ENCODE measurements at regions of chr17 and their contacts with region 1.

Region 1: GRCh38 chr17:40909351-40909750 is 24.3 kb upstream of the KRT20 start:
- DNase-seq: peak; percentile 98
- ATAC-seq: peak; percentile 93
- H3K4me3 ChIP-seq: no peak overlapping the region
- H3K27ac ChIP-seq: no peak overlapping the region
- H3K4me1 ChIP-seq: peaks cover 10% of the 10 kb centered on the region
- H3K27me3 ChIP-seq: no peaks in the 10 kb centered on the region
- CTCF ChIP-seq: peak; percentile 96
- POLR2A ChIP-seq: 0 out of 2 replicates have a peak, but pooled peaks have one; percentile 53
- RAD21 ChIP-seq: peak; percentile 99

Region 2: GRCh38 chr17:40854159-40854814 is 55.1 kb before region 1 on chr17:
- CTCF ChIA-PET with region 1: interaction called, 3 read pairs
- POLR2A ChIA-PET with region 1: no interaction called
- dilution Hi-C with region 1: no loop called
- in situ Hi-C with region 1: loop called (anchors 5 kb)
- intact Hi-C with region 1: loop called (anchors 2 kb)
- DNase-seq: peak; percentile 93
- ATAC-seq: peak; percentile 75
- H3K4me3 ChIP-seq: no peak overlapping the region
- H3K27ac ChIP-seq: no peak overlapping the region
- H3K4me1 ChIP-seq: peaks cover 19% of the 10 kb centered on the region
- H3K27me3 ChIP-seq: no peaks in the 10 kb centered on the region
- CTCF ChIP-seq: no peak
- POLR2A ChIP-seq: no peak
- RAD21 ChIP-seq: 0 out of 2 replicates have a peak, but pooled peaks have one; percentile 6

Region 3: DNA sequence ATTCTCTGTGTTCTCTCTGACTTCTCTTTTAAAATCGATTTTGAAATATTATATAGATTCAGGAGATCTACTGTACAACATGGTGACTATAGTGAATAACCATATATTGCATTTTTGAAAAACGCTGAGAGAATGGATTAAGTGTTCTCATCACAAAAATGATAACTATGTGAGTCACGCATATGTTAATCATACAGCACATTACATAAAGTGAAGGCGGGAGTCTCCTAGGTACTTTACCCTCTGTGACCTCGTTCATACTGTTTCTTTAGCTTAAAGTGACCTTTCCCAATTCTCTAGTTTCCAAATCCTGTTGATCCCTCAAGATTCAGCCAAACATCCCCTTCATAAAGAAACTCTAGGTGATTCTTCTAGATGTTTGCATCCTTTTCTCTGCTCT is 93.5 kb after region 1 on chr17:
- CTCF ChIA-PET with region 1: no interaction called
- POLR2A ChIA-PET with region 1: no interaction called
- dilution Hi-C with region 1: no loop called
- in situ Hi-C with region 1: no loop called
- intact Hi-C with region 1: no loop called
- DNase-seq: peak; percentile 17
- ATAC-seq: no peak
- H3K4me3 ChIP-seq: no peak overlapping the region
- H3K27ac ChIP-seq: no peak overlapping the region
- H3K4me1 ChIP-seq: no peaks in the 10 kb centered on the region
- H3K27me3 ChIP-seq: no peaks in the 10 kb centered on the region
- CTCF ChIP-seq: no peak
- POLR2A ChIP-seq: no peak
- RAD21 ChIP-seq: no peak

Region 4: GRCh38 chr17:41024697-41025096 is 115.3 kb after region 1 on chr17:
- CTCF ChIA-PET with region 1: no interaction called
- POLR2A ChIA-PET with region 1: no interaction called
- dilution Hi-C with region 1: no loop called
- in situ Hi-C with region 1: no loop called
- intact Hi-C with region 1: no loop called
- DNase-seq: peak; percentile 14
- ATAC-seq: no peak
- H3K4me3 ChIP-seq: no peak overlapping the region
- H3K27ac ChIP-seq: no peak overlapping the region
- H3K4me1 ChIP-seq: peaks cover 9% of the 10 kb centered on the region
- H3K27me3 ChIP-seq: no peaks in the 10 kb centered on the region
- CTCF ChIP-seq: no peak
- POLR2A ChIP-seq: no peak
- RAD21 ChIP-seq: no peak

Region 5: GRCh38 chr17:41322094-41322902 is 412.9 kb after region 1 on chr17:
- CTCF ChIA-PET with region 1: interaction called, 8 read pairs
- POLR2A ChIA-PET with region 1: no interaction called
- dilution Hi-C with region 1: no loop called
- in situ Hi-C with region 1: loop called (anchors 5 kb)
- intact Hi-C with region 1: loop called (anchors 1 kb)
- DNase-seq: peak; percentile 79
- ATAC-seq: peak; percentile 97
- H3K4me3 ChIP-seq: no peak overlapping the region
- H3K27ac ChIP-seq: peak overlapping the region; percentile 51; the same call in 1 of the 2 replicates
- H3K4me1 ChIP-seq: peaks cover 2% of the 10 kb centered on the region
- H3K27me3 ChIP-seq: no peaks in the 10 kb centered on the region
- CTCF ChIP-seq: peak; percentile 80
- POLR2A ChIP-seq: no peak
- RAD21 ChIP-seq: peak; percentile 81

Region 6: GRCh38 chr17:41496820-41497408 is 587.6 kb after region 1 on chr17:
- CTCF ChIA-PET with region 1: no interaction called
- POLR2A ChIA-PET with region 1: no interaction called
- dilution Hi-C with region 1: no loop called
- in situ Hi-C with region 1: no loop called
- intact Hi-C with region 1: loop called (anchors 1 kb)
- DNase-seq: peak; percentile 83
- ATAC-seq: peak; percentile 97
- H3K4me3 ChIP-seq: no peak overlapping the region
- H3K27ac ChIP-seq: peak overlapping the region; percentile 36; the same call in 1 of the 2 replicates
- H3K4me1 ChIP-seq: peaks cover 22% of the 10 kb centered on the region
- H3K27me3 ChIP-seq: no peaks in the 10 kb centered on the region
- CTCF ChIP-seq: peak; percentile 93
- POLR2A ChIP-seq: no peak
- RAD21 ChIP-seq: peak; percentile 94

Region 7: DNA sequence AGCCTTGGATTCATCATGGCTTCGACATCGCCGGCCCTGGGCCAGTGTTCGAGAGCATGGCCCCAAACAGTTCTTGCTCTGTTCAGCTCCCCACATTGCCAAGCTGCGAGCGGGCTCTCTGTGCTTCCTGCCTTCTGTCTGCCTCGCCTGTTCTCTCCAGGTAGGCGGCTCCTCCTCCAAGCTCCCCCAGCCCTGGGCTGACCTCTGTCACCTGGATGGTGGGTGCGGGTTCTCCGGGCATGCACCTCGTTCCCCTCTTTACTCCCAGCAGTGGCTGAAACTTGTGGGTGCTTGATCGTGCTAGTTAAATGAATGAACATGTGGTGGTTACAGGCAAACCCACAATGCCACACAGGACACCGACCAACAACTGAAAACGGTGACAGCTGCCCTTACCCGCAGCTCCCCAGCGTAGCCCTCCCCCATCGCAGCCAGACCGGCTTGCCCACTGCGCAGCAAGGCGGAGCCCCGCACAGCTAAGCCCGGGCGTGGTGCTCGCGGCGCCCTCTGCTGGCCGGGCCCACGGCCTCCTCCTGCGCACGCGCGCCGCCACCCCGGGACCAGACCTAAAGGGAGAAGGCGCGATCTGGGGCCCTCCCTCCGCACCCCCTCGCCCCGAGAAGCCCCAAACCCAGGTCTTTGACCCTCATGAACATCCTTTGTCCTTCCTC is 756.4 kb after region 1 on chr17:
- CTCF ChIA-PET with region 1: interaction called, 3 read pairs
- POLR2A ChIA-PET with region 1: no interaction called
- dilution Hi-C with region 1: no loop called
- in situ Hi-C with region 1: loop called (anchors 5 kb)
- intact Hi-C with region 1: loop called (anchors 1 kb)
- DNase-seq: peak; percentile 74
- ATAC-seq: peak; percentile 90
- H3K4me3 ChIP-seq: peak overlapping the region; percentile 40
- H3K27ac ChIP-seq: peak overlapping the region; percentile 55
- H3K4me1 ChIP-seq: peaks cover 11% of the 10 kb centered on the region
- H3K27me3 ChIP-seq: no peaks in the 10 kb centered on the region
- CTCF ChIP-seq: peak; percentile 94
- POLR2A ChIP-seq: no peak
- RAD21 ChIP-seq: peak; percentile 29; the same call in 1 of the 2 replicates